Activated CD8-positive, alpha-beta memory T cell treated with anti-CD3 and anti-CD28 coated beads, Interleukin-2, amount 10 ng/mL, durations not matched to agents 7 days and 5 days (primary cell): ENCODE measurements at regions of chr2 and their contacts with region 1.

Region 1: DNA sequence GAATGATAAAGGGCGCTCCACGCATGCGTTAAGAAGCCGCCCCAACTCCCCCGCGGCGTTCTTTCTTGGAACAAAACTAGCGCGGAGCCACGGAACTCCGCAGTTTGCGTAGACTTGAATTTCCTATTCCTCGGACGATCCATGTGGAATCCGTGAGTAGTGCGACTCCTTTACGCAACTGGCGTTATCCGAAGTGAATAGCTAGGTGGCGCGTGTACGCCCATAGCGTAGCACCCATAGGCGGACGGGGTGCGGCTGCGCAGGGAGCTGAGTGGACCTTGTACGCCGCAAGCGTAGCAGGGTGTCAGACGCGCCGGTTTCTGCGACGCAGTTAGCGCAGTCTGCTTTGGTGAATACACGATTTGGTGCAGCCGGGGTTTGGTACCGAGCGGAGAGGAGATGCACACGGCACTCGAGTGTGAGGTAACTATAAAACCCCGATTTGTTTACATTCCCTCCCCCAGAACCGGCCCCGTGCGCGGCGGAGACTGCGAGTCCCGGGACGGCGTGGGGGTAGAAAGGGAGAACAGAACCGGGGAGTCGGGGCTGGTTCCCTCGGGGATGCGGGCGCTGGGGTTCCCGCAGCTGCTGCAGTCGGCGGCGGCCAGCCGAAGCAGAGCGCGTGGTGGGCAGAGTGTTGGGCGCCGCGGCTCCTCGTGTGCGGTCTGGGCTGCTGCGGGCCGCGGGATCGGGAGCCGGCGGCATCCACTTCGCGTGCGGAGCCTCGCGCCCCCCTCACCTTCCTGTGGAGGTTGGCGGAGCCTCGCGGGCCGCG is at the start of gene SLC39A10:
- DNase-seq: peak; percentile 98
- ATAC-seq: peak; percentile 83
- H3K4me3 Mint-ChIP-seq: peak within 1 kb of the TSS; percentile 86
- H3K27ac Mint-ChIP-seq: peak within 1 kb of the TSS; percentile 99
- H3K4me1 Mint-ChIP-seq: peaks cover 20% of the 10 kb centered on the region
- H3K27me3 Mint-ChIP-seq: no peaks in the 10 kb centered on the region
- total RNA-seq, gene SLC39A10: 29.4 to 40.3 TPM

Region 2: DNA sequence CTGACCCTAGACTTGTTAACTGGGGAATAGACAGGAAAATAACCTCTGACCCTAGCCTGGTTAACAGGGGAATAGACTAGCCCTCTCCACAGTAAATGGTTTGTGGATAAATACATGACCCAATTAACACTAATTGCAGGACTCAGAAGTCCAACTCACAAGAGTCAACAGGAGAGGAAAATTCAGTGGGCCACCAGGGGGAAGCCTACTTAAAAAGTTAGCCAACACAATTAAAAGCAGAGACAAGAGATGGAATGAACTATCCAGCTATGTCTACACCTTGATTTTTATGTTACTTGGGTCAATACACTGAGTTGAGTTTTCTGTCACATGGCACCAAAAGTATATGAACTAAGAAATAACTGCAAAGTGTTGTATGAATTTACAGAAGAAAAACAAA is 158.9 kb before region 1 on chr2:
- CTCF ChIA-PET with region 1: interaction called, 33 read pairs
- DNase-seq: peak; percentile 71
- ATAC-seq: peak; percentile 61
- H3K4me3 Mint-ChIP-seq: no peak overlapping the region
- H3K27ac Mint-ChIP-seq: no peak overlapping the region
- H3K4me1 Mint-ChIP-seq: peaks cover 24% of the 10 kb centered on the region
- H3K27me3 Mint-ChIP-seq: no peaks in the 10 kb centered on the region

Region 3: DNA sequence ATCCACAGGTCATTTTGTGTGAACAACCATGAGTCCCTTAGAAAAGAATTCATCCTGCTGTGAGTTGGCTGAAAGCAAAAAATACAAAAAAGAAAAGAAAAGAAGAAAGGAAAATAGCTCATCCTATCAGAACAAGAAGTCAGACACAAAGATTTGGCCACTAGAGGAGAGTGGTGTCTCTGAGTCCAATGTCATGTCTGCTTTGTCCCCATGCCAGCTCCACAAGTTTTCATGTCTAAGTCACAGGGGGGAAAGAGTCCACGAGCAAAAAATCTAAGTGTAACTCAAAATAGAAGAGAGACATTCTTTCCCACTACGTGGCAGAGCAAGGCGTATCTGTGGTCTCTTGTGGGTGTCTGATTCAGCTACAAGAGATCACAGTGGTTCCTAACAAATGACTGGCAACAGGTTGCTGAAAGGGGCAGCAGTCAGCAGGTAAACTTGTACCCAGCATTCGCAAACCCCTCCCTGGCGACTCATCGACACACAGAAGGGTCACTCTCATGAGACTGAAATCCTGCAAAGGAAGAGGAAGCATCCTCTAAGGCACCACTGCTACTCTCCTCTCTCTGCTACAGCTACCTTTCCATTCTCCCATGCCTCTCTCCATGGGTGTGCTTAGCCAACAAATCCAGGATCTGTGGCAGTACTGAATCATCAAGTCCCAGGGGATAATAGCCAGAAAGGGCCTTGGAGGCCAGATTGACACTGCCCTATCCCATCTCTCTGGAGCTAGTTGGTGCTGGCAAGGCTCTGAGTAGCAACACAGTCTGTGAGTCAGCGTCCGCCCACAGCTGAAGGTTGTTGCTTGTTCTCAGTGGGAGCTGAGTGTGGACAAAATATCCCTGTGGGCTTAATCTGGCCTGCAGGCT is 123.0 kb before region 1 on chr2:
- CTCF ChIA-PET with region 1: interaction called, 43 read pairs
- DNase-seq: peak; percentile 88
- ATAC-seq: peak; percentile 63
- H3K4me3 Mint-ChIP-seq: peak overlapping the region; percentile 77
- H3K27ac Mint-ChIP-seq: peak overlapping the region; percentile 96
- H3K4me1 Mint-ChIP-seq: peaks cover 73% of the 10 kb centered on the region
- H3K27me3 Mint-ChIP-seq: no peaks in the 10 kb centered on the region

Region 4: DNA sequence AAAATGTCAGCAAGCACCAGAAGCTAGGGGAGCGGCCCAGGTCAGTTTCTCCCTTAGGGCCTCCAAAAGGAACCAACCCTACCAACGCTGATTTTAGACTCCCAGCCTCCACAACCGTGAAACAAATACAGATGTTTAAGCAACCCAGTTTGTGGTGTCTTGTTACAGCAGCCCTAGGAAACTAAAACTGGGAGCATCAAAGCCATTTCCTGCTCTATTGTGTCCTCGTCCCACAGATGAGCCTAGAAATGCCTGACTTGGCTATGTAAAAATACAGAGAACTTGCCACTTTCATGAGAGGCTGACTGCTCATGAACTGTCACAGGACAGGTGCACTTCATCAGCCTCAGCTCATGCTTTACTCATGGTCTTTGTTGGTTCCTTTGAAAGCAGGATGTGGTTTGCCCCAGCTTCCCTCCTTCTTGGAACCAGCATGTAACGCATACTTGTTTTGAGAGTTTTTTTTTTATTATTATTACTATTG is 97.6 kb before region 1 on chr2:
- CTCF ChIA-PET with region 1: interaction called, 27 read pairs
- DNase-seq: peak; percentile 96
- ATAC-seq: peak; percentile 79
- H3K4me3 Mint-ChIP-seq: peak overlapping the region; percentile 63
- H3K27ac Mint-ChIP-seq: peak overlapping the region; percentile 94
- H3K4me1 Mint-ChIP-seq: peaks cover 61% of the 10 kb centered on the region
- H3K27me3 Mint-ChIP-seq: no peaks in the 10 kb centered on the region

Region 5: GRCh38 chr2:195575879-195576401 is 81.1 kb before region 1 on chr2:
- CTCF ChIA-PET with region 1: interaction called, 11 read pairs
- DNase-seq: no peak
- ATAC-seq: peak; percentile 53
- H3K4me3 Mint-ChIP-seq: no peak overlapping the region
- H3K27ac Mint-ChIP-seq: peak overlapping the region; percentile 40
- H3K4me1 Mint-ChIP-seq: peaks cover 31% of the 10 kb centered on the region
- H3K27me3 Mint-ChIP-seq: no peaks in the 10 kb centered on the region

Region 6: DNA sequence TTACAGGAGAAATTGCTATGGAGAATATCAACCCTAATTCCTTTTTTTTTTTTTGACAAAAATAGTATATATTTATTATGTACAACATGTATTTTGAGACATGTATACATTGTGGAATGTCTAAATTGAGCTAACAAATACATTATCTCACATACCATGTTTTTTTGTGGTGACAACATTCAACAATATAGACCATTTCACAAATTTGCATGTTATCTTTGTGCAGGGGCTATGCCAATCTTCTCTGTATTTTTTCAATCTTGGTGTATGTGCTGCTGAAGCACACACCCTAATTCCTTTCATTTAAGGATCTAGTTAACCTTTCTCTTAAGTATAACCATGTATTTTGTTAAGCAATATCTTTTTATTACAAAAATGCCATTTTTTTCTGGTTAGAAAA is 13.1 kb after region 1 on chr2:
- CTCF ChIA-PET with region 1: interaction called, 10 read pairs
- DNase-seq: no peak
- ATAC-seq: no peak
- H3K4me3 Mint-ChIP-seq: no peak overlapping the region
- H3K27ac Mint-ChIP-seq: no peak overlapping the region
- H3K4me1 Mint-ChIP-seq: peaks cover 2% of the 10 kb centered on the region
- H3K27me3 Mint-ChIP-seq: no peaks in the 10 kb centered on the region

Region 7: DNA sequence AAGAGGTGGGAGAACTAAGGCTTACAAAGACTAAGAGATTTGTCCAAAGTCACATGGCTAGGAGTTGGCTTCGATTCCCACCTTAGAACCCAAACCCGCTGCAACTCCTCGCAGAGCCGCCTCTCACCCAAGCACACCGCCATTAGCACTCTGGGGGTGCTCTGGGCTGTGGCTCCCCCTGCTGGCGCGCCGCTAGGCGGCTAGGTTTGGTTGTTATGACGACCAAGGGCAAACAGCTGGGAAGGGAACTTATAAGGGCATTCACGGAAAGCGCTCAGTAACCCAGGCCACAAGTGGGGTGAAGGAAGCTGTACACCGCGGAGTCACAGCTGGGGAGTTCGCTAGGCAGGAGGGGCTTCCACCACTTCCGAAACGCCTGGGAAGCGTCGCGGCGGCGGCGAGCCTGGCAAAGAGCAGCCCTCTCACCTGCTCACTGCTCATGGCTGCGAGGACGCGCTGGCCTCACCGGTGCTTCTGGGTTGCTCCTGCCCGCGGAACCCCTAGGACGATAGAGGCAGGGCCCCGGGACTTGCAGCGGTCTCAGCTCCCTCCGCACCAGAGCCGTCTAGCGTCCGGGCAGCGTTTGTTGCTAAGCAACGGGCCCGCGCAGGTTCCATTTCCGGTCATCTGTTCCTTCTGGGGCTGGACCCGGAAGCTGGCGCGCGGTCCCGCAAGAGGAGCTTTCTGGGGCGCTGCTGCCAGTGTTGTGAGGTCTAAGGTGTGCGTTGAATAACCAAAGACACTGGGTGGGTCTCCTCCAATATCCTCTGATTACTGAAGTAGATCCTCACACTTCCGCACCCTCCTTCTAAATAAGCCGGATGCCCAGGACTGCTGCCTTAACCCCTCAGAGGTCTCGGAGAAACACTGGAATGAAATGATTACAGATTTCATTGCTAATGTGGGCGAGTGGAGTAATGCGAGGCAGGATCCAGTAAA is 411.5 kb after region 1 on chr2 and contains the start of gene DNAH7:
- CTCF ChIA-PET with region 1: interaction called, 13 read pairs
- DNase-seq: peak; percentile 96
- ATAC-seq: peak; percentile 93
- H3K4me3 Mint-ChIP-seq: peak within 1 kb of the TSS; percentile 76
- H3K27ac Mint-ChIP-seq: peak within 1 kb of the TSS; percentile 75
- H3K4me1 Mint-ChIP-seq: peaks cover 18% of the 10 kb centered on the region
- H3K27me3 Mint-ChIP-seq: peaks cover 12% of the 10 kb centered on the region
- total RNA-seq, gene DNAH7: 0.20 TPM in 1 of 2 experiments, not detected in the other